Posterior cingulate gyrus (tissue), 11 donors: ENCODE measurements at regions of chr9 and their contacts with region 1.

Region 1: GRCh38 chr9:21789541-21790037 is 12.8 kb upstream of the MTAP start:
- DNase-seq: peak in 5 of 10 donors; percentile 33 to 61 (median 51)

Region 2: GRCh38 chr9:21239911-21240310 is 549.7 kb before region 1 on chr9 and contains the start of gene IFNA14:
- intact Hi-C with region 1: loop called (anchors 10 kb)
- DNase-seq: no peak

Region 3: GRCh38 chr9:21465859-21466518 is 323.6 kb before region 1 on chr9:
- intact Hi-C with region 1: loop called (anchors 1 kb)
- DNase-seq: no peak

Region 4: GRCh38 chr9:21741151-21741550 is 48.4 kb before region 1 on chr9:
- intact Hi-C with region 1: no loop called
- DNase-seq: no peak

Region 5: DNA sequence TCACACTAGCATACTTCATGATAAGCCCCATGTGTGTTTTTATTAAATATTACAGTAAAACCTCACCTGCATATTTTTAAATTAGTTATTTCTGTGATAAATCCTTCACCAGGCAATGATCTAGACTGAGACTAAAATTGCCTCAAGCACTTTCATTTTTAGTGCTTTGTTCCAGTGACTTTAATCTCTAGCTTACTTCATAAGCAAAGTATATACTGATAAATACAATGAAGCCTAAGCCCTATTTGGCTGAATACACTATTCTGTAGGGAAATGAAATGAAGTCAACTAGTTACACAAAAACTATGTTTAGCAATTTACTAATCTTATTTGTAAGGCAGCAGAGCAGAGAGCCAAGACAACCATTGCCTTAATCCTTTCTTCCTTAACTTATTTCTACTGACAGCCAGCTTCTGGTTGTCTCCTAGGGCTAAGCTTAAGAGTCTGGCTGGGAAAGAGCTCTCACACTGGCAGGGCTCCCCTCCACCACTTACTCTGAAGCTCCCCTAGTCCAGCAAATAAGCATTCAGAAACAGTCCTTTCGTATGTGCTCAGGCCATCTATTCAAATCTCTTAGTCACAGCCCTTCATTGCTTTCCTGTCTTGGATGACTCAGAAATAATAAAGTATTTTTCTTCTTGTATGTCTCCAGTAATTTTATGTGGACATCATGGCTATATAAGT is 18.6 kb before region 1 on chr9:
- intact Hi-C with region 1: no loop called
- DNase-seq: no peak